Left ventricle myocardium inferior (tissue), 1 donor: ENCODE measurements at regions of chr7 and their contacts with region 1.

Region 1: GRCh38 chr7:106176414-106177299 is 64.5 kb upstream of the SYPL1 start:
- DNase-seq: peak; percentile 82
- H3K4me3 ChIP-seq: no peak overlapping the region
- H3K27ac ChIP-seq: peak overlapping the region; percentile 77
- H3K4me1 ChIP-seq: peaks cover 43% of the 10 kb centered on the region
- H3K27me3 ChIP-seq: no peaks in the 10 kb centered on the region
- CTCF ChIP-seq: peak; percentile 97

Region 2: DNA sequence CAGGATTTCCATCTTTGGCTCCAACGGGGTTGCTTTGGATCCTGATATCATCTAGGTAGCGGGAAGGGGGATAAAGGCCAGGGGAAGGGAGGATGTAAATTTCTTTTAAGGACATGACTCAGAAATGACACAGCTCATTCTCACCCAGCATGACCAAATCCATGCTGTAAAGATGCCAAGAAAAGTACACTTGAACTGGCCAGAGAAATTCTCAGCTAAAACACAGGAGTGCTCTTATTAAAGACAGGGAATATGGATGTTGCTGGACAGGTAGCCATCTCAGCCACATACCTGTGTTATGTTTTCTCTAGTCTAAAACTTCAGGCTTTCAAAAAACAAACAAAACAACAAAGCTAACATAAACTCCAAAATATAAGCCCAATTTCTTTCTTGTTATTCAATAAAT is 39.9 kb after region 1 on chr7:
- intact Hi-C with region 1: loop called (anchors 5 kb)
- DNase-seq: no peak
- H3K4me3 ChIP-seq: peak overlapping the region; percentile 51
- H3K27ac ChIP-seq: peak overlapping the region; percentile 97
- H3K4me1 ChIP-seq: peaks cover 45% of the 10 kb centered on the region
- H3K27me3 ChIP-seq: no peaks in the 10 kb centered on the region
- CTCF ChIP-seq: no peak

Region 3: DNA sequence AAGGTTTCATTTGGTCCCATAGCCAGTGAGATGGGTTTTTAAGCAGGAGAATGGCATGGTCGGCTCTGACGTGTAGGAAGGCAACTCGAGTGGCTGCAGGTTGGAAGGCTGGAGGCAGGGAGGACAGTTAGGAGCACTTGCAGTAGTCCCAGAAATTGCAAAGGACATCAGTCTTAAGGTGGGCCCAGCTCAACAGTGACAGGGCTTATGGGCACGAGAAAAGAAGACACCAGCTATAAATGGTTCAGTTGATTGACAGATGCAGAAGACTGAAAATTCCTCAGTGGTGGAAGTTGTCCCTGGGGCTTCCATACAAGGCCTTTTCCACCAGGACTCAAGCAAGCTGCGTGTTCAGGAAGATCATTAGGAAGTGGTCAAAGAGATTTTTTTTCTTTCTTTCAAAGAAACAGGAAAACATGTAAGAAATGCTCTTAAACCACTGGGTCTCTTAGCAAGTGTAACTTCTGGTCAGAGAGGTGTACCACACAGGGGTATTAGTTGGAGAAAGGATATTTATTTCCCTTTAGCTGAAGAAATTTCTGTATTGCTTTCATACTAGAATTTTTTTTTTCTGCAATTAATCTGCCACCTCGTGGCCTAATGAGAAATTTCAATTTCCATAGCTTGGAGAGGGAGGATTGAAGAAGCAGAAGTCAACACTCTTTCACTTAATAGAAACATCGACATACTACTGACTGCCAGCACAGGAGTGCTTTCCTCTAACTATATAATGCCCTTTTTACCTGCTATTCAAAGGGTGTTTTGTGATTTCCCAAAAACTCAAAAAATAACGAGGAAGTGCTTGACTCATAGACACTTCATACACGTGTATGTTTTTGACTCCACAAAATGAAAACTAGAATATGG is 285.6 kb after region 1 on chr7:
- intact Hi-C with region 1: loop called (anchors 2 kb)
- DNase-seq: no peak
- H3K4me3 ChIP-seq: no peak overlapping the region
- H3K27ac ChIP-seq: no peak overlapping the region
- H3K4me1 ChIP-seq: peaks cover 22% of the 10 kb centered on the region
- H3K27me3 ChIP-seq: no peaks in the 10 kb centered on the region
- CTCF ChIP-seq: peak; percentile 74